OCI-LY7 (cell line): ENCODE measurements at regions of chr11 and their contacts with region 1.

Region 1: DNA sequence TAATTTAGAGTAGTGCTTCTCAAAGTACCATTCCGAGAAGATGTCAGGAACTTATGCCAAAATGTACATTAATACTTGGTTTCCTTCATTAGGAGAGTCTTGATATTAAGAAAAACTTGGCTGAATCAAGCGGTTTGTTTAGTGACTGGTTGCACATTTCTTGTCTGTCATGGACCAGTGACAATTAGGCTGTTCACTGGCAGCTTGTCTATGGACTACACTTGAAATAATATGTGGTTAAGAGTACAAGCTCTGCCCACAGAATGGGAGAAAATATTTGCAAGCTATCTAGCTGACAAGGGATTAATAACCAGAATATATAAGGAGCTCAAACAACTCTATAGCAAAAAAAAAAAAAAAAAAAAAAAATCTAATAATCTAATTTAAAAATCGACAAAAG is 24.6 kb downstream of the COA4 start:
- DNase-seq: no peak
- H3K4me3 ChIP-seq: no peak overlapping the region
- H3K27ac ChIP-seq: no peak overlapping the region
- H3K4me1 ChIP-seq: no peaks in the 10 kb centered on the region
- CTCF ChIP-seq: no peak

Region 2: GRCh38 chr11:73866586-73866996 is 14.5 kb after region 1 on chr11:
- CTCF ChIA-PET with region 1: no interaction called
- POLR2A ChIA-PET with region 1: interaction called, 10 read pairs
- intact Hi-C with region 1: no loop called
- DNase-seq: no peak
- H3K4me3 ChIP-seq: no peak overlapping the region
- H3K27ac ChIP-seq: no peak overlapping the region
- H3K4me1 ChIP-seq: no peaks in the 10 kb centered on the region
- CTCF ChIP-seq: no peak